Endothelial cell of umbilical vein (primary cell): ENCODE measurements at regions of chr1 and their contacts with region 1.

Region 1: GRCh38 chr1:158124999-158125398 is 55.7 kb upstream of the CD1D start:
- DNase-seq: peak; percentile 93
- H3K4me3 ChIP-seq: no peak overlapping the region
- H3K27ac ChIP-seq: no peak overlapping the region
- H3K4me1 ChIP-seq: no peaks in the 10 kb centered on the region
- H3K27me3 ChIP-seq: peaks cover 16 to 23% of the 10 kb centered on the region in 2 experiments
- CTCF ChIP-seq: peak; percentile 84 to 89
- POLR2A ChIP-seq: no peak

Region 2: DNA sequence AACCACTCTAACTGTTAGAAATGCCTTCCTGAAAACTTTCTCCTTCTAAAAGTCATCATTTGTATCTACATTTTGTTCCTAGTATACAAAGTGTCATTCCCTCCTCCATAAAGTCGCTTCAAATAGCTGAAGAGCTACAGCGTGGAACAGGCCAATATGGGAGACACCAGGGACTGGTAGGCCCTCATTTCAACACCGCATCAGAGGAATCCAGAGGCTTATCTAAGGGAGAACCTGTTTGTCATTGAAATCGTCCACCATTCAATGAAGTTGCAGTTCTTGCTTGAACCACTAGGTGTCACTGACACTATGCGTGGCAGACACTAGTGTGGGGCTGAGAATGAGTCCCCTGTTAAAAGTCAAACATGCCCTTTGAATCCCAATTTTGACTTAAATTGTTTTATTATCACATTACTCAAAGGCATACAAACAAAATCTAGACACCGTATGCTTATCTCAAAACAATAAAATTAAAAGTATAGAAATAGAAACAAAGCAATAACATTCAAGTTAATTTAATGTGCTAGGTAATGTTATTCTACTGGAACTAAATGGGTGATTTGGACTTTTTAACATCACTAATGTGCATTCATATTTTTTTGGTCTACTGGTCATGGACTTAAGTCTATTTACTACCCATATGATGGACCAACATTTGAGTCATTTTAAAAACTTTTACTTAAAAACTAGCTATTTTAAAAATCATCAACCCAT is 755.0 kb before region 1 on chr1:
- CTCF ChIA-PET with region 1: interaction called, 5 read pairs
- POLR2A ChIA-PET with region 1: no interaction called
- dilution Hi-C with region 1: no loop called
- intact Hi-C with region 1: loop called (anchors 2 kb)
- DNase-seq: peak; percentile 71
- H3K4me3 ChIP-seq: no peak overlapping the region
- H3K27ac ChIP-seq: no peak overlapping the region
- H3K4me1 ChIP-seq: no peaks in the 10 kb centered on the region
- H3K27me3 ChIP-seq: peaks cover 2 to 3% of the 10 kb centered on the region in 2 experiments
- CTCF ChIP-seq: peak; percentile 70 to 77
- POLR2A ChIP-seq: no peak

Region 3: GRCh38 chr1:157770442-157771043 is 354.5 kb before region 1 on chr1:
- CTCF ChIA-PET with region 1: no interaction called
- POLR2A ChIA-PET with region 1: no interaction called
- dilution Hi-C with region 1: no loop called
- intact Hi-C with region 1: loop called (anchors 2 kb)
- DNase-seq: no peak
- H3K4me3 ChIP-seq: no peak overlapping the region
- H3K27ac ChIP-seq: no peak overlapping the region
- H3K4me1 ChIP-seq: no peaks in the 10 kb centered on the region
- H3K27me3 ChIP-seq: no peaks in the 10 kb centered on the region
- CTCF ChIP-seq: peak in 1 of 2 donors; percentile 4
- POLR2A ChIP-seq: no peak

Region 4: DNA sequence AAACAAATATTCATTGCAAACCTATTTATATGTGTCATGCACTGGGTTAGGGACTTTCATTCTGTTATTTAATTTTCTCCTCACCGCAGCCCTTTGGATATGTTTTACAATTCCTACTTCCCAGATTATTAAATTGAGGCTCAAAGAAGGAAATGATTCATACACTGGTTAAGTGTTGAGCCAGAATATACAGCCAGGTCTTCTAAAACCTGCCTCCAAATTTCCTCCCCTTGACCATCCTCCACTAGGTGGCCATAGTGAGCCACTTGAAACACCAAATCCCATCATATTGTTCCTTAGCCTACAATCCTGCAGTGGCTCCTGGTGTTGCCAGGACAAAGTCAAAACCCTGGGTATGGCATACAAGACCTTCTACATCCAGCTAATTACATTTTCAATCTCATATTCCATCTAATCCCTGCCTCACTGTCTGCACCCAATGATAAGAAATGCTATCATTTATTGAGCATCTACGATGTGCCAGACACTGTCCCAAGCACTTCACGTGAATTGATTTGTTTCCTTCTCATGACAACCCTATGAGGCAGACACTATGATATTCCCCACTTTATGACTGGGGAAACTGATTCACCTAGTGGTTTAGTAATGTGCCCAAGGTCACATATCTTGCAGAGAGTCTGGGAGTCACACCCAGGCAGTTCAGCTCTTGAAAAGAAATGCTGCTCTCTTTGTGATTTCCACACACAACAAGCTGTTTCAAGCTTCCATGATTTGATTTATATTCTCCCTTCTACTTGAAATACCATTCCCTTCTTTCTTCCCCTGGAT is 155.1 kb before region 1 on chr1:
- CTCF ChIA-PET with region 1: interaction called, 366 read pairs
- POLR2A ChIA-PET with region 1: no interaction called
- dilution Hi-C with region 1: no loop called
- intact Hi-C with region 1: loop called (anchors 1 kb)
- DNase-seq: peak; percentile 90
- H3K4me3 ChIP-seq: no peak overlapping the region
- H3K27ac ChIP-seq: peak overlapping the region; percentile 10
- H3K4me1 ChIP-seq: peaks cover 17% of the 10 kb centered on the region
- H3K27me3 ChIP-seq: peaks cover 2 to 4% of the 10 kb centered on the region in 2 experiments
- CTCF ChIP-seq: peak; percentile 75 to 90
- POLR2A ChIP-seq: no peak

Region 5: DNA sequence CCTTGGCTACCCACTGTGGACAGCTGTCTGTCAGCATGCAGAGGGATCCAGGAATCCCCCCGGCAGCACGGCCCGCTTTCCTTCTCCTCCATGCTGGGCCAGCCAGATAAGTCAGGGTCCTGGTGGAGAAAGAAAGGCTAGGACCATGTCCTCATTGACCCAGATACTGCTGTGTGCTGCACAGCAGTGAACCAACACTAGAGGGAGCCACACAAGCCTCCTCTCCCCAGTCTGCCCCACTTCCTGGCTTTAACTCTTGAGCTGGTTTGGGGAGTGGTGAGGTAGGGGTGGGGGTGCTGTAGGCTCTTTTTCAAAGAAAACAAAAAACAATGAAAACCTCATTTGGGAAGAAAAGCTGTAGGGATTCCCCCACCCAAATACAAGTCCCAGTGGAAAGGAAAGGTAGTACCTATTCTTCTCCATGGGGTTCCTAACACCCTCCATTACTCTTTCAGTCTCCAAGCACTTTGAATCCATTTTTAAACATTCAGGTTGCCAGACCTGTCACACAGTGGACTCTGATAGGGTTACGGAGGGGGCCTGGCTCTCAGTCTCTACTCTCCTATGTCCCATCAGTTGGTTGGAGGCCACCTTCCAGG is 29.2 kb before region 1 on chr1:
- CTCF ChIA-PET with region 1: interaction called, 52 read pairs
- POLR2A ChIA-PET with region 1: no interaction called
- dilution Hi-C with region 1: no loop called
- intact Hi-C with region 1: loop called (anchors 1 kb)
- DNase-seq: peak; percentile 41
- H3K4me3 ChIP-seq: no peak overlapping the region
- H3K27ac ChIP-seq: no peak overlapping the region
- H3K4me1 ChIP-seq: no peaks in the 10 kb centered on the region
- H3K27me3 ChIP-seq: no peaks in the 10 kb centered on the region
- CTCF ChIP-seq: peak; percentile 81 to 82
- POLR2A ChIP-seq: no peak

Region 6: DNA sequence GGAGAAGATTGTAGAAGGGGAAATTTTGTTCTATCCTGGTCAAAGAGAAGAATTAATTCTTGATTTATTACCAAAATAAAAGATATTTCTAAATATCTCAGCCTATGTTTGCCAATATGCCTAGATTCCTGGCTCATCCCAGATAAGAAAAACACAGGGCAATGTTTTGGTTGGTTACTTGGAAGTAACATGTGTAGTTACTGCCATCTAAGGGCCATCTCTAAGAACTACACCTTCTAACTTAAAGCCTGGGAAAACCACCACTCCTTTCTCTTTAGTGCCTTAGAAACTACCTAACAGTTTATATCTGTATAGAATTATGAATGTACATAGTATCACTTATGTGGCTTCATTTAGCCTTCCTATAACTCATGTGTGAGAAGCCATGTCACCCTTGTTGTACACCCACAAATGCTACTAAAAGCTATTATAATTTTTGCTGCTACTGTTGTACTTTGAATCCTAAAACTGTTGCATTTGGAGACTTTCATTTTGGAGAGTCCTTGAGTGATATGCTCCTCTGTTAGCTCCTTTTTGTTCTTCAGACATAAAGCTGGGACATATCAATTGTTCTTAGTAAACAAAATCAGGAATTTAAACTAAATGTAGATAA is 947.1 kb after region 1 on chr1:
- CTCF ChIA-PET with region 1: interaction called, 13 read pairs
- POLR2A ChIA-PET with region 1: no interaction called
- dilution Hi-C with region 1: no loop called
- intact Hi-C with region 1: loop called (anchors 1 kb)
- DNase-seq: peak; percentile 66
- H3K4me3 ChIP-seq: no peak overlapping the region
- H3K27ac ChIP-seq: no peak overlapping the region
- H3K4me1 ChIP-seq: peaks cover 8% of the 10 kb centered on the region
- H3K27me3 ChIP-seq: peaks cover 11 to 14% of the 10 kb centered on the region in 2 experiments
- CTCF ChIP-seq: peak; percentile 50 to 57
- POLR2A ChIP-seq: no peak